ENCODE measurements at regions of chr12 and their contacts with region 1.

Region 1: DNA sequence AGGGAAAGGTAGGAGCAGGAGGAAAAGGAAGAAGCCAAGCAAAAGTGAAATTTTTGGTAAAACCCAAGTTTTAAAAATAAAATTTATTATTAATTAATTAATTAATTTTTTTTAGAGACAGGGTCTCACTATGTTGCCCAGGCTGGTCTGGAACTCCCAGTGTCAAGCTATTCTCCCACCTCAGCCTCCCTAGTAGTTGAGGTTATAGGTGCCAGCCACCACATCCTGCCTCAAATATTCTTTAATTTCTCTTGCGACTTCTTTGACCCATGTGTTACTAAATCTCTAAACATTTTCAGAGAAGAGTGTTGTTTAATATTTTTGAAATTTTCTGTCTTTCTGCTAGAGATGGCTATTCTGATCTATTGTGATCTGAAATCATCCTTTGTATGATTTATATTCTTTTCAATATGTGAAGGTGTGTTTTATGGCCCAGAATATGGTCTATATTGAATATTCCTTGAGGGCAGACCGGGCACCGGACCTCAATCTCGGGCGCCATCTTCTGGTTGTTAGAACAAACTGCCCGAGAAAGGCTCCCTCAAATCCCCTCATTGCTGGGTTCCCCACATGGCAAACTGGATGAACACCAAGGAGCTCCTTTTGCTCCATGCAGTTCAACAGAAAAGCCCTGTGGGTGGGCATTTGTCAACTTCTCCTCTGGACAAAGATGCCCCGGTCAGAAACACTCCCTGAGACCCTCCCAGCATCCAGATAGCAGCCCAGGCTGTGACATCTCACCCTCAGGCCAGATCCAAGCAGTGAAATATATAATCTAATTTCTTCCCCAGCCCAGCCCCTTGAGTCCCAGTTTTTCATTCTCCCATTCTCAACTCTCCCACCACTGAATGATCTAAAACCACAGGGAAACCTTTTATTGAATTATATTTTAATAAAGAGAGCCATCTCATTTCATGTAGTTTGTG is 110.5 kb downstream of the ASCL4 start:
- DNase-seq: peak; percentile 69
- ATAC-seq: peak; percentile 77
- H3K4me3 Mint-ChIP-seq: no peak overlapping the region
- H3K27ac Mint-ChIP-seq: no peak overlapping the region
- H3K4me1 Mint-ChIP-seq: no peaks in the 10 kb centered on the region
- H3K27me3 Mint-ChIP-seq: peaks cover 10% of the 10 kb centered on the region
- CTCF ChIP-seq: peak; percentile 81

Region 2: DNA sequence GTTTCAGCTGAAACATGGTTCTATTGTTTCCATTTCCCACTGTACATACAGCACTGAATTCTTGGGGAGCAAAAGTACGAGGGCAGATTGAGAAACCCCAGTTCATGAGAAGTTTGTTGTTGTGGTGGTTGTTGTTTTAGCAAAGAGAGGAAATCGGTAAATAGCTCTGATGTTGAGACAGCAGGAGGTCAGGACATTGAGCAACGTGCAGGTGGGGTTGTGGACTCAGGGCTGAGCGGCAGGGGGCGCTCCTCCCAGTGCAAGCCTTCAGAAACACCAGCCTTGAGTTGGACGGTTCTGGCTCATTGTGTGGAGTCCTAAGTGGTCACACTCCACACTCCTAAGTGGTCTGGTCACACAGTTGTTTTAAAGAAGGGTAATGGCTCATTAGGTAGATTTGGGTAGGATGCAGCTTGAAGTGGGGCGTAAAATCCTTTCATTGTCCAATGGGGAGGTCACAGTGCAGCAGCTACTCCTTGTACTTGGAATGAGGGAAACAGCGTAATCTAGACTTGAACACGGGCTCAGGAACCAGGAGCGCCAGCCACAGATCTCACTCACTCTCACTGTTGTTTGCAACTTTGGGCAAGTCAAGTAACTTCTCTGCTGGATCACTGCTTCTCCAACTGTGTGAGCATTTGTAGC is 213.9 kb before region 1 on chr12:
- CTCF ChIA-PET with region 1: interaction called, 21 read pairs
- POLR2A ChIA-PET with region 1: no interaction called
- intact Hi-C with region 1: loop called (anchors 5 kb)
- DNase-seq: peak; percentile 65
- ATAC-seq: peak; percentile 70
- H3K4me3 Mint-ChIP-seq: no peak overlapping the region
- H3K27ac Mint-ChIP-seq: no peak overlapping the region
- H3K4me1 Mint-ChIP-seq: peaks cover 2% of the 10 kb centered on the region
- H3K27me3 Mint-ChIP-seq: peaks cover 6% of the 10 kb centered on the region
- CTCF ChIP-seq: peak; percentile 78

Region 3: GRCh38 chr12:107679336-107679735 is 205.7 kb before region 1 on chr12:
- CTCF ChIA-PET with region 1: interaction called, 21 read pairs
- POLR2A ChIA-PET with region 1: no interaction called
- intact Hi-C with region 1: loop called (anchors 5 kb)
- DNase-seq: no peak
- ATAC-seq: no peak
- H3K4me3 Mint-ChIP-seq: no peak overlapping the region
- H3K27ac Mint-ChIP-seq: no peak overlapping the region
- H3K4me1 Mint-ChIP-seq: no peaks in the 10 kb centered on the region
- H3K27me3 Mint-ChIP-seq: peaks cover 10% of the 10 kb centered on the region
- CTCF ChIP-seq: no peak

Region 4: GRCh38 chr12:107760809-107761501 is 124.1 kb before region 1 on chr12 and contains the start of gene PRDM4:
- CTCF ChIA-PET with region 1: interaction called, 6 read pairs
- POLR2A ChIA-PET with region 1: no interaction called
- intact Hi-C with region 1: loop called (anchors 5 kb)
- DNase-seq: peak; percentile 89
- ATAC-seq: peak; percentile 95
- H3K4me3 Mint-ChIP-seq: peak within 1 kb of the TSS; percentile 92
- H3K27ac Mint-ChIP-seq: peak within 1 kb of the TSS; percentile 89
- H3K4me1 Mint-ChIP-seq: peaks cover 25% of the 10 kb centered on the region
- H3K27me3 Mint-ChIP-seq: no peaks in the 10 kb centered on the region
- CTCF ChIP-seq: no peak
- total RNA-seq, gene PRDM4: 19.3 to 21.7 TPM

Region 5: GRCh38 chr12:107912421-107913004 is 27.5 kb after region 1 on chr12:
- CTCF ChIA-PET with region 1: interaction called, 13 read pairs
- POLR2A ChIA-PET with region 1: interaction called, 4 read pairs
- intact Hi-C with region 1: no loop called
- DNase-seq: peak; percentile 74
- ATAC-seq: peak; percentile 86
- H3K4me3 Mint-ChIP-seq: peak overlapping the region; percentile 68
- H3K27ac Mint-ChIP-seq: no peak overlapping the region
- H3K4me1 Mint-ChIP-seq: peaks cover 3% of the 10 kb centered on the region
- H3K27me3 Mint-ChIP-seq: peaks cover 40% of the 10 kb centered on the region
- CTCF ChIP-seq: peak; percentile 86